ENCODE measurements at regions of chr1 and their contacts with region 1.

Region 1: GRCh38 chr1:229227298-229227919 is 43.5 kb upstream of the RAB4A start:
- DNase-seq: peak; percentile 82
- H3K4me3 ChIP-seq: no peak overlapping the region
- H3K27ac ChIP-seq: peak overlapping the region; percentile 12 to 30
- H3K4me1 ChIP-seq: peaks cover 17% of the 10 kb centered on the region
- H3K27me3 ChIP-seq: no peaks in the 10 kb centered on the region
- CTCF ChIP-seq: peak; percentile 87 to 93 (median 89)
- POLR2A ChIP-seq: no peak

Region 2: DNA sequence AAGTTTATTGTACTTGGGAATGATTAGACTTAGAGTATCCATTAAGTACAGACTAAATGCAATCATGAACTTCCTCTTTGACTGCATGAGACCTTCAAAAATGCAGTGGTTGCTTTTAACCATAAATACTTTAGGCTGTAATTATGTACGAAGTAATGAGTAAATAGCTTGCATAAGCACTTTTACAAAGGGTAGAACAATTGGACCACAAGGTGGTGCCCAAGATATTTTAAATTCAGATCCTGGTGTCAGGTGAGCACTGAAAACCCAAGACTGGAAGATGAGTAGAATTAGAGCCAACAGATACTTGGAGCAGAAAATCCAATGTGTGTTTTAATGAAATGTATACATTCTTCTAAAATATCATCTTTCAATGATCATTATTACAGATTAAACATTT is 535.5 kb before region 1 on chr1:
- intact Hi-C with region 1: loop called (anchors 5 kb)
- DNase-seq: peak; percentile 70
- H3K4me3 ChIP-seq: no peak overlapping the region
- H3K27ac ChIP-seq: peak overlapping the region; percentile 30 to 41
- H3K4me1 ChIP-seq: no peaks in the 10 kb centered on the region
- H3K27me3 ChIP-seq: no peaks in the 10 kb centered on the region
- CTCF ChIP-seq: peak; percentile 42 to 86 (median 70)
- POLR2A ChIP-seq: no peak

Region 3: DNA sequence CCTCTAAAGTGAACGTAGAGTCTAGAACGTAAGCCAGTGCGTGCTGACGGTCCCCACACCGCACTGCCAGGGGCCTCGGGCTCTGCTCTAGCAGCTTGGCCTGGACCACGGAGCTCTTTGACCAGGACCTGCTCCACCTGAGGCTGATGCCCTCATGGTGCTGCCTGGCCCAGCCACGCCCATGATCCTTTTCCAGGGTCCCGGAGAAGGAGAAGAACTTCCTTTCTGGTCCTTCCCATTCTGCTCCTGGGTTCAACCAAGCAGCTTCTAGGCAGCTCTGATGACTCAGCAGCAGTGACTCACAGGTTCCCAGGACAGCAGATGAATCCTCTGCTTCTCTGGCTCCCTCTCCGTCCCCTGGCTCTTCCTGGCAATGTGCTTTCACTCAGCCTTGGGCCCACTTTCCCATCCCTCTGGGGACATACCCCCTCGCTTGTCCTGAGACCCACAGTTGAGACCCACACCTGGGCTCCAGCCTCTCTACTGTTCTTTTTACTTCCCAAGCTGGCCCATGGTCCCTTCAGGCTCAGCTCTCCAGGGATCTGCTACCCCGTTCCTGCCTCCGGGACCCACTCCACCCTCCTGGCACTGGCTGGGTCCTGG is 202.8 kb before region 1 on chr1:
- intact Hi-C with region 1: loop called (anchors 10 kb)
- DNase-seq: no peak
- H3K4me3 ChIP-seq: no peak overlapping the region
- H3K27ac ChIP-seq: no peak overlapping the region
- H3K4me1 ChIP-seq: no peaks in the 10 kb centered on the region
- H3K27me3 ChIP-seq: no peaks in the 10 kb centered on the region
- CTCF ChIP-seq: no peak
- POLR2A ChIP-seq: no peak

Region 4: GRCh38 chr1:229117664-229118300 is 109.6 kb before region 1 on chr1:
- intact Hi-C with region 1: loop called (anchors 5 kb)
- DNase-seq: peak; percentile 85
- H3K4me3 ChIP-seq: no peak overlapping the region
- H3K27ac ChIP-seq: peak overlapping the region; percentile 44 to 77
- H3K4me1 ChIP-seq: peaks cover 13% of the 10 kb centered on the region
- H3K27me3 ChIP-seq: no peaks in the 10 kb centered on the region
- CTCF ChIP-seq: no peak
- POLR2A ChIP-seq: no peak

Region 5: GRCh38 chr1:229186373-229187056 is 40.9 kb before region 1 on chr1:
- intact Hi-C with region 1: no loop called
- DNase-seq: no peak
- H3K4me3 ChIP-seq: no peak overlapping the region
- H3K27ac ChIP-seq: no peak overlapping the region
- H3K4me1 ChIP-seq: no peaks in the 10 kb centered on the region
- H3K27me3 ChIP-seq: no peaks in the 10 kb centered on the region
- CTCF ChIP-seq: no peak
- POLR2A ChIP-seq: no peak

Measured in prostate gland (tissue), 2 donors.